MCF 10A (cell line): ENCODE measurements at regions of chr7 and their contacts with region 1.

Region 1: DNA sequence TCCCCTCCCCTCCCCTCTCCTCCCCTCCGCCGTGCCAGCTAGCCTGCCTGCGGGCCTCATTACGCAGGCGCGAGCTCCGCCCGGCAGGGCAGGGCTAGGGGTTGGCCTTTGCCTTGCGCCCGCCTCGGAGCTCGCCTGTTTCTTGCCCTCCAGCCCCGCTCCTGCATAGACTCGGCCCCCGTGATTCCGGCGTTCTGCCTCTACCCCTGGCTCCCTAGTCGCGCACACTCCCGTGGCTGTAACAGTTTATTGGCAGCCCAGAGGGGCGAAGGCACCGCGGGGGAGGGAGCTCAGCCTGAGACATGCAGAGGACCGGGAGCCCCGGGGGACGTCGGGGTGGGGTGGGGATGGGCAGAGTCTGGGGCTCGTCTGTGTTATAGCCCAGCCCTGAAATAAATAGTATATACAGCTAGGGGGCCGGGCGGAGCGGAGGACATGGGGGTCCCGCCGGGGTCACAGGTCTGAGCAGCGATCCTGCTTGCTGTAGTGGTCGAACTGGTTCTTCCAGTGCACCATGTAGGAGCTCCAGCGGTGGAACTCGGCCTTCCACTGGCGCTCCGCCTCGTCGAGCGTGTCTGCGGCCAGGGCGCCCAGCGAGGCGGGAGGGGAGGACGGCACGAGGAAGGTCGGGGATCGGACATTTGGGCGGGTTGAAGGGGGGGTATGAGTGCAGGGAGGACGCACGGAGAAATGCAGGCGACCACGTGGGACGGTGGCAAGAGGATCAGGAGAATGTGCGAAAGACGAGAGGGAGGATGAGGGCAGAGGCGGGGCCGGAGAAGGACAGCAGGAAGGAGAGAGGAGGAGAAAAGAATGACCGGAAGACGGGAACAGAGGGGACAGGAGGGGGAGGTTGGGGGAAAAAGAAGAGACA is 483 bp upstream of the UFSP1 start:
- DNase-seq: peak; percentile 92
- H3K4me3 Mint-ChIP-seq: peak overlapping the region; percentile 90
- H3K27ac Mint-ChIP-seq: peak overlapping the region; percentile 83
- H3K4me1 Mint-ChIP-seq: peaks cover 22% of the 10 kb centered on the region
- H3K27me3 Mint-ChIP-seq: no peaks in the 10 kb centered on the region
- CTCF ChIP-seq: no peak

Region 2: GRCh38 chr7:100573691-100574361 is 316.2 kb before region 1 on chr7 and contains the start of gene SAP25:
- CTCF ChIA-PET with region 1: no interaction called
- POLR2A ChIA-PET with region 1: no interaction called
- intact Hi-C with region 1: no loop called
- DNase-seq: no peak
- H3K4me3 Mint-ChIP-seq: no peak within 1 kb of the TSS
- H3K27ac Mint-ChIP-seq: no peak within 1 kb of the TSS
- H3K4me1 Mint-ChIP-seq: no peaks in the 10 kb centered on the region
- H3K27me3 Mint-ChIP-seq: no peaks in the 10 kb centered on the region
- CTCF ChIP-seq: no peak
- total RNA-seq, gene SAP25: 1.2 and 2.9 TPM in 2 replicates

Region 3: GRCh38 chr7:100867040-100867775 is 22.8 kb before region 1 on chr7 and contains the start of gene TRIP6:
- CTCF ChIA-PET with region 1: no interaction called
- POLR2A ChIA-PET with region 1: interaction called, 10 read pairs
- intact Hi-C with region 1: no loop called
- DNase-seq: peak; percentile 95
- H3K4me3 Mint-ChIP-seq: peak within 1 kb of the TSS; percentile 85
- H3K27ac Mint-ChIP-seq: peak within 1 kb of the TSS; percentile 99
- H3K4me1 Mint-ChIP-seq: peaks cover 6% of the 10 kb centered on the region
- H3K27me3 Mint-ChIP-seq: no peaks in the 10 kb centered on the region
- CTCF ChIP-seq: no peak
- total RNA-seq, gene TRIP6: 106 and 132 TPM in 2 replicates

Region 4: DNA sequence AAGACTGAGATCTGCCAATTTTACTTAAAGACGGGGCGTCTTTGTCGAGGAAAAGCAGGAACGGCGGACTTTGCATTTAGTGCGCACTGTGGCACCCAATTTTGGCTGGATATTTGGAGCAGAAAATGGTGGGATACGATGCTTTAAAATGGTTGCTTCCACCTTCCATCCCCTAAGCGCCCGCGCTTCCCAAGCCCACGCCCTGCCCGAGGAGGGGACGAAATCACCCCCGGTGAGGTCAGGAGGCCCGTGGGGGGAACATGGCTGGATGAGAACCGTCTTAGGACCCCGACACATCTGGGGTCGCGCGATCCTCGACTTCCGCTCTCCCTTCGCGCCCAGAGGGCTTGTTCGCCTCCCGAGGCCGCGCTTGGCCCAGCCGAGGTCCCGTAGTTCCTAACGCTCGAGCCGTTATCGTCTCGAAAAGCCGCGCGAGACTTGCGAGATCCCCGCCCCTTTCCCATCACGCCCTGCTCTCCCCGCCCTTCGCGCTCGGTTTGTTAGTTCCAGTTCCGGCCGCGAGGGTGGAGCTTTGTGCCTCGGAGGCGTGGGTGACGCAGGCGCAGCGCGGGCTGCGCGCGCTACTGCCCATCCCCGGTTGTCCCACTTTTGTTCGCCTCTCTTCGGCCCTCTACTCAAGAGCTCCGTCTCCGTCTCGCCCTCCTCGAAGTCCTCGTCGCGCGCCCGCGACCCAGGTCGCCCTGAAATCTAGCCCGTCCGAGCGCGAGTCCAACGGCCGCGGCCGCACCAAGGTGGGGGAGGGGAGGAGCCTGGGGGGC is 15.2 kb before region 1 on chr7 and contains the start of gene SRRT:
- CTCF ChIA-PET with region 1: interaction called, 10 read pairs
- POLR2A ChIA-PET with region 1: interaction called, 157 read pairs
- intact Hi-C with region 1: no loop called
- DNase-seq: peak; percentile 99
- H3K4me3 Mint-ChIP-seq: peak within 1 kb of the TSS; percentile 97
- H3K27ac Mint-ChIP-seq: peak within 1 kb of the TSS; percentile 98
- H3K4me1 Mint-ChIP-seq: peaks cover 30% of the 10 kb centered on the region
- H3K27me3 Mint-ChIP-seq: no peaks in the 10 kb centered on the region
- CTCF ChIP-seq: no peak
- total RNA-seq, gene SRRT: 111 and 142 TPM in 2 replicates

Region 5: DNA sequence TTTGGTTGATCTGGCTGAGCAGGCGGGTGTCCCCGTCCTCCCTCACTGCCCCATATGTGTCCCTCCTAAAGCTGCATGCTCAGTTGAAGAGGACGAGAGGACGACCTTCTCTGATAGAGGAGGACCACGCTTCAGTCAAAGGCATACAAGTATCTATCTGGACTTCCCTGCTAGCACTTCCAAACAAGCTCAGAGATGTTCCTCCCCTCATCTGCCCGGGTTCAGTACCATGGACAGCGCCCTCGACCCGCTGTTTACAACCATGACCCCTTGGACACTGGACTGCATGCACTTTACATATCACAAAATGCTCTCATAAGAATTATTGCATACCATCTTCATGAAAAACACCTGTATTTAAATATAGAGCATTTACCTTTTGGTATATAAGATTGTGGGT is 168.4 kb after region 1 on chr7:
- CTCF ChIA-PET with region 1: interaction called, 47 read pairs
- POLR2A ChIA-PET with region 1: interaction called, 4 read pairs
- intact Hi-C with region 1: no loop called
- DNase-seq: peak; percentile 55
- H3K4me3 Mint-ChIP-seq: no peak overlapping the region
- H3K27ac Mint-ChIP-seq: no peak overlapping the region
- H3K4me1 Mint-ChIP-seq: no peaks in the 10 kb centered on the region
- H3K27me3 Mint-ChIP-seq: peaks cover 77% of the 10 kb centered on the region
- CTCF ChIP-seq: no peak

Region 6: GRCh38 chr7:101066141-101066832 is 176.3 kb after region 1 on chr7:
- CTCF ChIA-PET with region 1: interaction called, 47 read pairs
- POLR2A ChIA-PET with region 1: interaction called, 3 read pairs
- intact Hi-C with region 1: no loop called
- DNase-seq: peak; percentile 65
- H3K4me3 Mint-ChIP-seq: no peak overlapping the region
- H3K27ac Mint-ChIP-seq: no peak overlapping the region
- H3K4me1 Mint-ChIP-seq: peaks cover 10% of the 10 kb centered on the region
- H3K27me3 Mint-ChIP-seq: peaks cover 44% of the 10 kb centered on the region
- CTCF ChIP-seq: no peak

Region 7: DNA sequence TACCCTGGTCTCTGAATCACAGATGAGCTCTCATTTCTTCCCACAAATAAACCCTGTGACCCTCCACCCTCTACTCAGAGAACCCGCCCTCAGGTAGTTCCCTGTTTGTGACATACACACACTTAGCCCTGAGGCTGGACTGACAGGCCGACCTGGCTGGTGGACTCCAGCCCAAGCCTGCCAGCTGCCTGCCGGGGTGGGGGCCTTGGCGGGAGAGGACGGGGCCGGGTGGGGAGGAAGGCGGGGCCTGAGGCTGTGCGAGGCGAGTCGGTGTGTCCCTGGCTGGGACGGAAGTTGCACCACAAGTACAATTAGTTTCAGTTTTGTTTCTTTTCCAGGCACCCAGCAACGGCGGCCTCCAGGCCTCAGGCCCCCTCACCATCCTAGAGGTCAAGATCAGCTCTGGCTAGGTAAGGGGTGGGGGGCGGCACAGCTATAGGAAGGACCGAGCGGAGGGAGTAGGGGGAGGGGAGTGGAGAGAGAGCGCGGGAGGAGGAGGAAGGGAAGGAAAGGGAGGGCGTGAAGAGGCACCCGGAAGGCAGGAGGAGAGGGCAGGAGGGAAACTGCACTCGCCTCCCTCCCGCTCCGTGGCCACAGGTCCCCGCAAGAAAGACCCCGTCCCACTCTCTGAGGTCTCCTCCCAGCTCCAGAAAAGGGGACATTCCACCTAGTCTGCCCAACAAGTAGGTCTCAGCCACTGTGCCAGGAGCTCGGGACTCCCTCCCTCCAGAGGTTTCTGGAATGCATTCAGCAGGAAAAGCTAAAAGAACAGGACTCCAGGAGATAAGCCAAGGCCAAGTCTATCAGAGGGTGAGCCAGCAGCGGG is 195.4 kb after region 1 on chr7 and contains the start of gene TRIM56:
- CTCF ChIA-PET with region 1: interaction called, 4 read pairs
- POLR2A ChIA-PET with region 1: interaction called, 16 read pairs
- intact Hi-C with region 1: no loop called
- DNase-seq: peak; percentile 90
- H3K4me3 Mint-ChIP-seq: peak within 1 kb of the TSS; percentile 94
- H3K27ac Mint-ChIP-seq: peak within 1 kb of the TSS; percentile 98
- H3K4me1 Mint-ChIP-seq: peaks cover 13% of the 10 kb centered on the region
- H3K27me3 Mint-ChIP-seq: no peaks in the 10 kb centered on the region
- CTCF ChIP-seq: no peak
- total RNA-seq, gene TRIM56: 29.6 and 36.8 TPM in 2 replicates